ENCODE measurements at regions of chr2 and their contacts with region 1.

Region 1: GRCh38 chr2:24971536-24972314 is at the start of gene DNAJC27:
- DNase-seq: peak; percentile 99
- ATAC-seq: peak; percentile 91
- H3K4me3 Mint-ChIP-seq: peak within 1 kb of the TSS; percentile 86
- H3K27ac Mint-ChIP-seq: peak within 1 kb of the TSS; percentile 99
- H3K4me1 Mint-ChIP-seq: peaks cover 17% of the 10 kb centered on the region
- H3K27me3 Mint-ChIP-seq: no peaks in the 10 kb centered on the region
- total RNA-seq, gene DNAJC27: 5.9 to 6.6 TPM

Region 2: GRCh38 chr2:24409700-24410556 is 561.8 kb before region 1 on chr2:
- CTCF ChIA-PET with region 1: interaction called, 4 read pairs
- POLR2A ChIA-PET with region 1: no interaction called
- intact Hi-C with region 1: loop called in 1 of 2 experiments (anchors 1 kb)
- DNase-seq: peak; percentile 37
- ATAC-seq: peak; percentile 86
- H3K4me3 Mint-ChIP-seq: no peak overlapping the region
- H3K27ac Mint-ChIP-seq: no peak overlapping the region
- H3K4me1 Mint-ChIP-seq: no peaks in the 10 kb centered on the region
- H3K27me3 Mint-ChIP-seq: peaks cover 7% of the 10 kb centered on the region

Region 3: DNA sequence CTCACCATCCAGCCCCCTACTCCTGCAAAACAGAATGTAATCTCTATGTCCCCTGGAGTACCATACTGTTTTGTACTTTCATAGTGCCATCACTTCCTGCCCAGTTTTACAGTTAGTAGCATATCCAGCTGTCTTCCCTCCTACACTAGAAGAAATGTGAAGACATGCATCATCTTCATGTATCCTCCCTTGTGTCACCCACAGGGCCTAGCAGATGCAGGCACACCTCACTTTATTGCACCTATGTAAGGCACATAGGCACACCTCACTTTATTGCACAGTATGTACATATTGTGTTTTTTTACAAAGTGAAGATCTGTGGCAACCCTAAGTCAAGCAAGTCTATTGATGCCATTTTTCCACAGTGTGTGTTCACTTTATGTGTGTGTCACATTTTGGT is 12.0 kb before region 1 on chr2:
- CTCF ChIA-PET with region 1: interaction called, 16 read pairs
- POLR2A ChIA-PET with region 1: interaction called, 4 read pairs
- intact Hi-C with region 1: no loop called
- DNase-seq: no peak
- ATAC-seq: peak; percentile 58
- H3K4me3 Mint-ChIP-seq: no peak overlapping the region
- H3K27ac Mint-ChIP-seq: no peak overlapping the region
- H3K4me1 Mint-ChIP-seq: peaks cover 12% of the 10 kb centered on the region
- H3K27me3 Mint-ChIP-seq: no peaks in the 10 kb centered on the region

Region 4: DNA sequence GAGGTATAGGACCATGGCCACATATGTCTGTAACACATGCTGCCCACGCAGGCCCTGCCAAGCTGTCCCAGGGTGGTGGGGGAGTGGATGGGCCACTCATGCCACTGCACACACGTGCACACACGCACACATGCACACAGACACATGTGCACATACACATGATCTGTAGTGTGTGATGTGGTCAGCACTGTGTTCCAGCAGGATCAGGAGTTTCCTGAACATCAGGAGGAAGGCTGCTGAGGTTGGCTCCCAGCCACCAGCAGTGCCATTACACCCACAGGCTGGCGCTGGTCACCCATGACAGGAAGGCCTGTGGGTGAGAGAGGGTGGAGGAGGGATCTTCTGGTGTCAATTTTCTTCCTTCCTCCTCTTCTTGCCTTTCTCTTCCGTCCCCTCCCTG is 152.0 kb after region 1 on chr2:
- CTCF ChIA-PET with region 1: interaction called, 141 read pairs
- POLR2A ChIA-PET with region 1: interaction called, 5 read pairs
- intact Hi-C with region 1: no loop called
- DNase-seq: no peak
- ATAC-seq: no peak
- H3K4me3 Mint-ChIP-seq: no peak overlapping the region
- H3K27ac Mint-ChIP-seq: no peak overlapping the region
- H3K4me1 Mint-ChIP-seq: no peaks in the 10 kb centered on the region
- H3K27me3 Mint-ChIP-seq: peaks cover 2% of the 10 kb centered on the region

Region 5: DNA sequence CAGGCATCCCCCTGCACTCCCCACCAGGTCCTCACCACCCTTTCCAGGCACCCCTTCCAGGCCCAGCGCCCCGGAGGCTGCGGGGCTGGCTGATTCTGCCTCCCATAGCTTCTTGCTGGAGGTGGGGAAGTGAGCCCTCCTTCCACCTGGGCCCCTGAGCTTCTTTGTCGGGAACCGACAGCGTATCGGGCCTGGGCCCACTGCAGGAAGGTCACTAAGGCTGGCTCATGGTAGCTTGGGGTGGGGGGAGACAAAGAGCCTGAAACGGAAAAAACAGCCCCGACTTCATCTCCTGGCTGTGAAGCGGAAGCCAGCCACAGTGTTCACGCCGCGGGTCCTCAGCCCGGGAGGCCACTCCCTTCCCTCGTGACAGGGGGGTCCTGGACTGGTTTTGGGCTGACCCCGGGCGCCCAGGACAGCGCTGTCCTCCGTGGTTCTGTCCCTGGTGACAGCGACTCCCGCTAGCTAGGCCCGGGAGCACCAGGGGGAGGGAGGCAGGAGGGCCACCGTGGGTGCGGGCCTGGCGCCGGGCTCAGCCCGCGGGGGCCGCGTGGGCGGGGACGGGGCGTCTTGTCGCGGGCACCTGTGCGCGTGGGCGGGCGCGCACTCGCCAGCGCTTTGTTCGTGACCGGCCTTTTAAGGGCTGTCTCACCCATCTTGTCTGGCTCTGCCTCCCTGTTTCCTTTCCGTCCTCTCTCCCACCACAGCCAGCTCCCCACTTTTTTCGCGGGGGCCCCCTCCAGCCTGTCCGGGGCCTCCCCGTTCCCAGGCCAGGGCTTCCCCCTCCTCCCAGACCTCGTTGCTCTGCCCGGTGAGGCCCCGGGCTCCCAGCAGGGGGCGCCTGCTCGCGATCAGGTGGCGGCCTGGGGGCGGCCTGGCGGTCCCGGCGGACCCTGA is 305.1 kb after region 1 on chr2:
- CTCF ChIA-PET with region 1: interaction called, 3 read pairs
- POLR2A ChIA-PET with region 1: no interaction called
- intact Hi-C with region 1: loop called in 1 of 2 experiments (anchors 2 kb)
- DNase-seq: peak; percentile 90
- ATAC-seq: peak; percentile 65
- H3K4me3 Mint-ChIP-seq: peak overlapping the region; percentile 9
- H3K27ac Mint-ChIP-seq: peak overlapping the region; percentile 90
- H3K4me1 Mint-ChIP-seq: peaks cover 70% of the 10 kb centered on the region
- H3K27me3 Mint-ChIP-seq: no peaks in the 10 kb centered on the region

Region 6: GRCh38 chr2:25651071-25651470 is 679.3 kb after region 1 on chr2:
- CTCF ChIA-PET with region 1: no interaction called
- POLR2A ChIA-PET with region 1: no interaction called
- intact Hi-C with region 1: no loop called
- DNase-seq: no peak
- ATAC-seq: no peak
- H3K4me3 Mint-ChIP-seq: no peak overlapping the region
- H3K27ac Mint-ChIP-seq: no peak overlapping the region
- H3K4me1 Mint-ChIP-seq: no peaks in the 10 kb centered on the region
- H3K27me3 Mint-ChIP-seq: no peaks in the 10 kb centered on the region

Region 7: GRCh38 chr2:25878361-25879132 is 906.8 kb after region 1 on chr2 and contains the start of gene ASXL2:
- CTCF ChIA-PET with region 1: no interaction called
- POLR2A ChIA-PET with region 1: no interaction called
- intact Hi-C with region 1: loop called in 1 of 2 experiments (anchors 2 kb)
- DNase-seq: peak; percentile 99
- ATAC-seq: peak; percentile 87
- H3K4me3 Mint-ChIP-seq: peak within 1 kb of the TSS; percentile 91
- H3K27ac Mint-ChIP-seq: peak within 1 kb of the TSS; percentile 95
- H3K4me1 Mint-ChIP-seq: peaks cover 45% of the 10 kb centered on the region
- H3K27me3 Mint-ChIP-seq: no peaks in the 10 kb centered on the region
- total RNA-seq, gene ASXL2: 36.8 to 46.4 TPM

Measured in activated CD4-positive, alpha-beta T cell treated with anti-CD3 and anti-CD28 coated beads for 36 hours (primary cell).